ENCODE measurements at regions of chrX and their contacts with region 1.

Region 1: GRCh38 chrX:67718926-67719325 is 175.1 kb downstream of the AR start:
- DNase-seq: peak in 1 of 2 donors; percentile 58
- ATAC-seq: peak; percentile 53 to 88
- H3K4me3 ChIP-seq: no peak overlapping the region
- H3K27ac ChIP-seq: peak overlapping the region; percentile 28 to 72 (median 61)
- H3K4me1 ChIP-seq: peaks cover 15 to 27% of the 10 kb centered on the region in 2 donors
- H3K27me3 ChIP-seq: no peaks in the 10 kb centered on the region
- CTCF ChIP-seq: no peak
- POLR2A ChIP-seq: no peak

Region 2: DNA sequence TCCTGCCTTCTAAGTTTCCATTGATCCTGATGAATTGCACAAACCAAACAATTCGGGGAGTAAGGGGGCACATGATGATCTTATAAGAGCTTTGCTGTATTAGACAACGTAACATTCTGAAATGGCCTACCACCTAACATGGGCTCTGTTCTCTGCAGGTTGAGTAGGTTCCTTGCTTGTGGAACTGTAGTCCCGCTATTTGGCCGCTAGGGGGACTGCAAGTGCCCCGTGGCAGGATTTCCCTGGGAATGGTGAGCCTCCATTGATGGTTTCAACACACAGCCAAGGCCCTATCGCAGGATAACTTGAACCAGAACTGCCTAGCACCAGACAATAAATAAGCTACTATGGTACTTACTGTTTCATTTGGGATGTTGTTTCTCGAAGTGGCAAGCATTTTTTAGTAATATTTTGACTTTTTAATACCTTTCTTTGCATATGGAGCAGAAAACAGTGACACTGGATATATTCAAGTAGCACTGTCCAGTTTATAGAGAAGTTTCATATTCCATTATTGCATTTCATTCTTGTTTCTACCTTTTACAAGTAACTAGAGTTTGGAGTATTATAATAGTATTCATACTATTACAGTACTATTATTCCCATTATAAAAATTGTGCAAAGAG is 163.2 kb before region 1 on chrX:
- in situ Hi-C with region 1: loop called in 1 of 4 experiments (anchors 25 kb)
- intact Hi-C with region 1: loop called (anchors 5 kb)
- DNase-seq: peak in 1 of 2 donors; percentile 20
- ATAC-seq: peak in 1 of 2 donors; percentile 61
- H3K4me3 ChIP-seq: no peak overlapping the region
- H3K27ac ChIP-seq: no peak overlapping the region
- H3K4me1 ChIP-seq: peaks cover 0 to 10% of the 10 kb centered on the region in 2 donors
- H3K27me3 ChIP-seq: no peaks in the 10 kb centered on the region
- CTCF ChIP-seq: peak; percentile 40 to 72 (median 50)
- POLR2A ChIP-seq: no peak

Measured in gastrocnemius medialis (tissue), 4 donors.